ENCODE measurements at regions of chr17 and their contacts with region 1.

Region 1: GRCh38 chr17:47840740-47841603 is at the start of gene SCRN2:
- DNase-seq: peak; percentile 90
- H3K4me3 ChIP-seq: peak within 1 kb of the TSS; percentile 87
- H3K27ac ChIP-seq: peak within 1 kb of the TSS; percentile 81
- H3K4me1 ChIP-seq: peaks cover 40% of the 10 kb centered on the region
- H3K27me3 ChIP-seq: peaks cover 25% of the 10 kb centered on the region
- CTCF ChIP-seq: peak; percentile 99
- total RNA-seq, gene SCRN2: 27.1 TPM

Region 2: GRCh38 chr17:47675380-47676198 is 165.4 kb before region 1 on chr17:
- intact Hi-C with region 1: no loop called
- DNase-seq: no peak
- H3K4me3 ChIP-seq: no peak overlapping the region
- H3K27ac ChIP-seq: no peak overlapping the region
- H3K4me1 ChIP-seq: peaks cover 20% of the 10 kb centered on the region
- H3K27me3 ChIP-seq: no peaks in the 10 kb centered on the region
- CTCF ChIP-seq: no peak

Region 3: DNA sequence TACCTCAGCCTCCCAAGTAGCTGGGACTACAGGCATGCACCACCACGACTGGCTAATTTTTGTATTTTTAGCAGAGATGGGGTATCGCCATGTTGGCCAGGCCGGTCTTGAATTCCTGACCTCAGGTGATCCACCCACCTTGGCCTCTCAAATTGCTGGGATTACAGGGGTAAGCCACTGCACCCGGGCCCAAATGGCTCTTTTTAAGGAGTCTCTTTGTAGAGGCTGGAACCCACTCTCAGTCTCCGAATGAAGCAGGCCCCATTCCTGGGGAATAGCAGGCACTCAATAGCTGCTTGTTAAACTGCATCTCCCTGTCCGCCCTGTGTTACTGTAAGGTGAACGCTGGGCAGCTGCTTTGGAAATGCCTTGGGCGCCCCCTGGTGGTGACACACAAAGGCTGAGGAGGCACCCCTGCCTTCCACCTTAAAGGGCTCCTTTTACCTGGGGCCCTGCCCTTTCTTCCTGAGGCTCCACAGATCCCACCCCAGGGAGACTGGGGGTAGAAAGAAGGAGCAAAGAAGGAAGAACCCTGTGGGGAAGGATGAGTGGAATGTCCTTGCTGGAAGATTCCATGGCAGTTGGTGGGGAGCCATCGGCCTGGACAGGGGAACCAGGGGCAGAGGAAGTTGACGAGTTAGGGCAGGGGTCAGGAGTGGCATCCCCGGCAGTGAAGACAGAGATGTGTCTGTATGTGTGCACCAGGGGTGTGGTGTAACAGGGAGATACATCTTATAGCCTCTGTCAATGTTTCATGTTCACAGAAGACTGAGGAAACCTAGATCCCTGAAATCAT is 49.0 kb after region 1 on chr17:
- intact Hi-C with region 1: loop called (anchors 2 kb)
- DNase-seq: peak; percentile 89
- H3K4me3 ChIP-seq: no peak overlapping the region
- H3K27ac ChIP-seq: no peak overlapping the region
- H3K4me1 ChIP-seq: peaks cover 15% of the 10 kb centered on the region
- H3K27me3 ChIP-seq: no peaks in the 10 kb centered on the region
- CTCF ChIP-seq: peak; percentile 97

Region 4: DNA sequence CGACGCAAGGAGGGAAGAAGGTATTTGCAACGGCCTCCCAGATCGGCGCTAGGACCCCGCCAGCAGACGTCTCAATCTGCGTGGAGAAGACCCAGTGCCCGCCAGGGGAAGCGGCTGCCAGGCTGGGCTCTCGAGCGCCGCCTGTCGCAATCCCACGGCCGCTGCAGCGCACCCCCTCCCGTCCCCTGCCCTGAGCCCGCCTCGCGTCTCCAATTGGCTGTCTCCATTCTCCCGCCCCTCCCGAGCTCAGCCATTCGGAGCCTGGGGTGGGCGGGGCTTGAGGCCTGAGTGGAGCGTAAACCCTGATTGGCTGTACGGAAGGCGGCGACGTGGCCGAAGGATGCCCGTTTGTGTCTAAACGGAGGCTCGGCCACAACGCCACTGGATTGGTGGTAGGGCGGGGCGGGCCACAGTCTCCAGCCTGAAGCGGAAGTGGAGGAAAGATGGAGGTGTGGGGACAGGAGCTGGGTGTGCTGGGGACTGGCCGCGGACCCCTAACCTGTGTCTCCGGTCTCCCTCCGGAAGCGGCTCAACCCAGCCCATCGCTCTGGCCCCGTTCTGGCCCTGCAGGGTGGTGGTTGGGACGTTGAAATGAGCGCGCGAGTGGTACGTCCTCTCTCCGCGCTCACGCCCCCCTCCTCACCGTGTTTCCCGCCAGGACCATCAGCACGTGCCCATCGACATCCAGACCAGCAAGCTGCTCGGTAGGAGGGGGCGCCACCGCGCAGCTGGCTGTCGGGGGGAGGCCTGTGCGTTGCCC is 129.9 kb after region 1 on chr17 and contains the start of gene CDK5RAP3:
- intact Hi-C with region 1: loop called (anchors 10 kb)
- DNase-seq: peak; percentile 100
- H3K4me3 ChIP-seq: peak within 1 kb of the TSS; percentile 93
- H3K27ac ChIP-seq: peak within 1 kb of the TSS; percentile 85
- H3K4me1 ChIP-seq: peaks cover 21% of the 10 kb centered on the region
- H3K27me3 ChIP-seq: no peaks in the 10 kb centered on the region
- CTCF ChIP-seq: peak; percentile 97
- total RNA-seq, gene CDK5RAP3: 50.1 TPM